Dorsolateral prefrontal cortex (tissue), 120 donors: ENCODE measurements at regions of chr1 and their contacts with region 1.

Region 1: DNA sequence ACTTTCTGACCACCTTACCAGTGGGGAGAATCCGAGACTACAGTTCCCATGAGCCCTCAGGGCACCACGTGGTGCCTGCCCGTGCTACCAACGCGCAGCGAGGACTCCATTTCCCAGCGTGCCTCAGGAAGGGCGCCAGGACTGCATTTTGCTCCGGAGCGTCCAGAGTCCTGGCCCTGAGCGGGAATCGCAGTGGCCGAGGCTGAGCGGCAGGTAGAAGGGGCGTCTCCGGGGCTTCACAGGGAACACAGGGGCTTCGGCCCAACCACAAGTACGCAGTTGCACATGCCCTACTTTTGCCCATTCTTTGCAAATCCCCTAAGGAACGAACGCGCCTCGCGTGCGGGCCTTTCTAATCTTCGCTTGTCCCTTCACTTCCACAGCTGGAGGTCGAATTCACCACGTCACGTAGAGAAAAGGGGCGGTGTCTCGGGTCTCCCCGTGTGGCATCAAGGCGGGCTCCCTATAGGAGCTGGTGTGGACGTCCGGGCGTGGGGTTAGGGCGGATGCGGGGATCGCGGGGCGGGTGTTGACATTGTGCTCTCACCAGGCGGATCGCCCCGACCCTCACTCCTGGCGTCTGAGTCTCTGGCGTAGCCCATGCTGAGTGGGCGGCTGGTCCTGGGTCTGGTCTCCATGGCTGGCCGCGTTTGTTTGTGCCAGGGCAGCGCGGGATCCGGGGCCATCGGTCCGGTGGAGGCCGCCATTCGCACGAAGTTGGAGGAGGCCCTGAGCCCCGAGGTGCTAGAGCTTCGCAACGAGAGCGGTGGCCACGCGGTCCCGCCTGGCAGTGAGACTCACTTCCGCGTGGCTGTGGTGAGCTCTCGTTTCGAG is at the start of gene BOLA1:
- DNase-seq: peak; percentile 93 to 97 (median 96)
- H3K4me3 ChIP-seq: peak within 1 kb of the TSS; percentile 47 to 90 (median 77)
- H3K27ac ChIP-seq: peak within 1 kb of the TSS; percentile 21 to 94 (median 86)
- H3K27me3 ChIP-seq: no peaks in the 10 kb centered on the region
- CTCF ChIP-seq: peak in 35 of 56 donors; percentile 7 to 54 (median 31)
- total RNA-seq, gene BOLA1: 10.4 to 23.1 (median 15.9) TPM

Region 2: GRCh38 chr1:149917571-149918144 is 18.0 kb after region 1 on chr1 and contains the start of gene SV2A:
- intact Hi-C with region 1: loop called in 1 of 2 experiments (anchors 2 kb)
- DNase-seq: peak; percentile 42 to 85 (median 74)
- H3K4me3 ChIP-seq: peak within 1 kb of the TSS; percentile 55 to 94 (median 81)
- H3K27ac ChIP-seq: peak within 1 kb of the TSS in 57 of 59 donors; percentile 28 to 92 (median 79)
- H3K27me3 ChIP-seq: no peaks in the 10 kb centered on the region
- CTCF ChIP-seq: no peak
- total RNA-seq, gene SV2A: 78.3 to 287 (median 196) TPM

Region 3: GRCh38 chr1:149927503-149928387 is 28.1 kb after region 1 on chr1 and contains the start of gene SF3B4:
- intact Hi-C with region 1: loop called in 1 of 2 experiments (anchors 1 kb)
- DNase-seq: peak; percentile 95 to 99 (median 97)
- H3K4me3 ChIP-seq: peak within 1 kb of the TSS; percentile 73 to 100 (median 92)
- H3K27ac ChIP-seq: peak within 1 kb of the TSS; percentile 78 to 99 (median 97)
- H3K27me3 ChIP-seq: no peaks in the 10 kb centered on the region
- CTCF ChIP-seq: peak in 50 of 56 donors; percentile 6 to 64 (median 38)
- total RNA-seq, gene SF3B4: 17.5 to 36.2 (median 25.7) TPM